K562 (cell line): ENCODE measurements at regions of chr9 and their contacts with region 1.

Region 1: GRCh38 chr9:94783102-94783664 is 56.7 kb downstream of the AOPEP start:
- DNase-seq: peak in 3 of 4 experiments; percentile 29 to 70 (median 30)
- ATAC-seq: peak; percentile 90
- H3K4me3 ChIP-seq: no peak overlapping the region
- H3K27ac ChIP-seq: no peak overlapping the region
- H3K4me1 ChIP-seq: peaks cover 0 to 5% of the 10 kb centered on the region in 2 experiments; a peak in 1 of 5 replicates
- H3K27me3 ChIP-seq: no peaks in the 10 kb centered on the region
- CTCF ChIP-seq: peak; percentile 72 to 84 (median 75)
- EP300 ChIP-seq: no peak
- POLR2A ChIP-seq: no peak
- RAD21 ChIP-seq: peak; percentile 69 to 90

Region 2: GRCh38 chr9:94668418-94668932 is 114.7 kb before region 1 on chr9:
- CTCF ChIA-PET with region 1: no interaction called
- POLR2A ChIA-PET with region 1: no interaction called
- in situ Hi-C with region 1: no loop called
- intact Hi-C with region 1: loop called (anchors 5 kb)
- DNase-seq: no peak
- ATAC-seq: no peak
- H3K4me3 ChIP-seq: no peak overlapping the region
- H3K27ac ChIP-seq: no peak overlapping the region
- H3K4me1 ChIP-seq: peaks cover 3 to 4% of the 10 kb centered on the region in 2 experiments; a peak in 3 of 5 replicates
- H3K27me3 ChIP-seq: peaks cover 22 to 24% of the 10 kb centered on the region in 2 experiments; a peak in 4 of 5 replicates
- CTCF ChIP-seq: no peak
- EP300 ChIP-seq: no peak
- POLR2A ChIP-seq: no peak
- RAD21 ChIP-seq: no peak

Region 3: DNA sequence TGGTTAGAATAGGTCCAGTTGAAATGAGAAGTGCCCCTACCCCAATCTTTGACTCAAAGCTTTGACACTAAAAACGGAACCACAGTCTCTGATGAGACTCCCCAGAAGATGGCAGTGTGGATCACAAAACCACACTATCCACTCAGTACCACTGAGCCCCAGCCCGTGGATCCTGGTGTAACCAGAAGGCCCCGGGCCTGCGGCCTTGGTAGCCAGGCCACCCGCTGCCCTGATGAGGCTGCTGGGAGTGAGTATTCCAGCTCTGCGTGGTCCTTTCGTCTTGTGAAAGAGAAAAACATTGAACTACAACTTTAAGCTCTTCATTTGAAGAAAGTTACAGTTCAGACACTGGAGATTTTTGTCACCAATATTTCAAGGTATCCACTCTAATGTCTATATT is 101.7 kb before region 1 on chr9:
- CTCF ChIA-PET with region 1: interaction called, 3 read pairs
- POLR2A ChIA-PET with region 1: interaction called, 3 read pairs
- in situ Hi-C with region 1: no loop called
- intact Hi-C with region 1: loop called (anchors 2 kb)
- DNase-seq: peak; percentile 39 to 72 (median 55)
- ATAC-seq: peak; percentile 97
- H3K4me3 ChIP-seq: no peak overlapping the region
- H3K27ac ChIP-seq: no peak overlapping the region
- H3K4me1 ChIP-seq: no peaks in the 10 kb centered on the region
- H3K27me3 ChIP-seq: peaks cover 21 to 32% of the 10 kb centered on the region in 2 experiments; a peak in 4 of 5 replicates
- CTCF ChIP-seq: peak; percentile 77 to 78 (median 78)
- EP300 ChIP-seq: no peak
- POLR2A ChIP-seq: no peak
- RAD21 ChIP-seq: peak; percentile 83 to 90

Region 4: GRCh38 chr9:94839398-94839797 is 56.2 kb after region 1 on chr9:
- CTCF ChIA-PET with region 1: no interaction called
- POLR2A ChIA-PET with region 1: no interaction called
- in situ Hi-C with region 1: no loop called
- intact Hi-C with region 1: no loop called
- DNase-seq: no peak
- ATAC-seq: no peak
- H3K4me3 ChIP-seq: no peak overlapping the region
- H3K27ac ChIP-seq: no peak overlapping the region
- H3K4me1 ChIP-seq: no peaks in the 10 kb centered on the region
- H3K27me3 ChIP-seq: no peaks in the 10 kb centered on the region
- CTCF ChIP-seq: no peak
- EP300 ChIP-seq: no peak
- POLR2A ChIP-seq: no peak
- RAD21 ChIP-seq: no peak

Region 5: DNA sequence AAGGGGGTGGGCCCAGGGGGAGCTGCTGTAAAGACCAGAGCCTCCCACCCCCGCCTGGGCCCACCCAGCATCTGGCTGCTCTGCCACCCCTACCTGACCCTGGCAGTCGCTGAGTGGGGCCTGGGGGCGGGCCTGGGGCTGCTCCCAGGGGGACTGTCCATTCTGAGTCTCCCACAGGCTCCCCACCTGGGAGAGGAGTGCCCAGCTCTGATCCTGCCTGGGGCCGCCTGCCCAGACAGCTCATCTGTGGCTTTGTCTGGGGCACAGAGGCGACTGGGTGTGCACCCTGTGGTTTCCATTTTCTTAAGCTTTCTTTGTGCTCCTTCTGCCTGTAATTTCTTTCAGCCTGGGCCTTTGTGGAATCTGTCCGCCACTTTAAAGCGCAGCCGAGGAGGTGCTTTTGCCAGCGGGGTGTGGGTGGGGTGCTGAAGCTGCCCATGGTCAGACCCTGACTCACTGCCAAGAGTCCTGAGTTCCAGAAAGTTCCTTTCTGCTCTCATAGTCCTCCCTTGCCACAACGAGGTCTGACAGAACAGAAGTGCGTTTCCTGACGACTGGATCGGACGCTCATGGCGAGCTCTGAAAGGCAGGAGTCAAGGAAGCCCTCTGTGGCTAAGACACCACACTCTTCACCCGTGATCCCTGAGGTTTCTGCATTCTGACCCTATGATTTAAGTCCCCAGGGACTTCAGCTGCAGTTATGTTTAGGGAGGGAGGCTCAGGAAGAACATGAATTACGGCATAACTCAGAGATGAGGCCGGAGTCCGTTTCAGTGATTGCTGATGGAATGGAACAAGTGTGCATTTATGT is 309.3 kb after region 1 on chr9:
- CTCF ChIA-PET with region 1: interaction called, 4 read pairs
- POLR2A ChIA-PET with region 1: no interaction called
- in situ Hi-C with region 1: loop called (anchors 10 kb)
- intact Hi-C with region 1: loop called (anchors 10 kb)
- DNase-seq: no peak
- ATAC-seq: no peak
- H3K4me3 ChIP-seq: no peak overlapping the region
- H3K27ac ChIP-seq: no peak overlapping the region
- H3K4me1 ChIP-seq: peaks cover 0 to 49% of the 10 kb centered on the region in 2 experiments; a peak in 3 of 5 replicates
- H3K27me3 ChIP-seq: no peaks in the 10 kb centered on the region
- CTCF ChIP-seq: no peak
- EP300 ChIP-seq: no peak
- POLR2A ChIP-seq: no peak
- RAD21 ChIP-seq: no peak

Region 6: GRCh38 chr9:95127249-95128176 is 344.3 kb after region 1 on chr9:
- CTCF ChIA-PET with region 1: interaction called, 14 read pairs
- POLR2A ChIA-PET with region 1: no interaction called
- in situ Hi-C with region 1: loop called (anchors 10 kb)
- intact Hi-C with region 1: loop called (anchors 1 kb)
- DNase-seq: peak; percentile 81 to 82 (median 82)
- ATAC-seq: peak; percentile 99
- H3K4me3 ChIP-seq: no peak overlapping the region
- H3K27ac ChIP-seq: no peak overlapping the region
- H3K4me1 ChIP-seq: peaks cover 0 to 6% of the 10 kb centered on the region in 2 experiments; a peak in 2 of 5 replicates
- H3K27me3 ChIP-seq: no peaks in the 10 kb centered on the region
- CTCF ChIP-seq: peak; percentile 96 to 99 (median 99)
- EP300 ChIP-seq: no peak
- POLR2A ChIP-seq: no peak
- RAD21 ChIP-seq: peak; percentile 81 to 90